ENCODE measurements at regions of chr7 and their contacts with region 1.

Region 1: GRCh38 chr7:12458520-12459131 is 55.0 kb upstream of the VWDE start:
- DNase-seq: peak; percentile 52
- H3K4me3 ChIP-seq: no peak overlapping the region
- H3K27ac ChIP-seq: no peak overlapping the region
- H3K4me1 ChIP-seq: no peaks in the 10 kb centered on the region
- H3K27me3 ChIP-seq: peaks cover 0 to 5% of the 10 kb centered on the region in 2 experiments
- CTCF ChIP-seq: peak; percentile 42 to 62
- POLR2A ChIP-seq: no peak

Region 2: GRCh38 chr7:12031638-12032037 is 427.0 kb before region 1 on chr7:
- CTCF ChIA-PET with region 1: no interaction called
- POLR2A ChIA-PET with region 1: no interaction called
- dilution Hi-C with region 1: no loop called
- intact Hi-C with region 1: no loop called
- DNase-seq: peak; percentile 30
- H3K4me3 ChIP-seq: no peak overlapping the region
- H3K27ac ChIP-seq: no peak overlapping the region
- H3K4me1 ChIP-seq: peaks cover 2% of the 10 kb centered on the region
- H3K27me3 ChIP-seq: no peaks in the 10 kb centered on the region
- CTCF ChIP-seq: no peak
- POLR2A ChIP-seq: no peak

Region 3: DNA sequence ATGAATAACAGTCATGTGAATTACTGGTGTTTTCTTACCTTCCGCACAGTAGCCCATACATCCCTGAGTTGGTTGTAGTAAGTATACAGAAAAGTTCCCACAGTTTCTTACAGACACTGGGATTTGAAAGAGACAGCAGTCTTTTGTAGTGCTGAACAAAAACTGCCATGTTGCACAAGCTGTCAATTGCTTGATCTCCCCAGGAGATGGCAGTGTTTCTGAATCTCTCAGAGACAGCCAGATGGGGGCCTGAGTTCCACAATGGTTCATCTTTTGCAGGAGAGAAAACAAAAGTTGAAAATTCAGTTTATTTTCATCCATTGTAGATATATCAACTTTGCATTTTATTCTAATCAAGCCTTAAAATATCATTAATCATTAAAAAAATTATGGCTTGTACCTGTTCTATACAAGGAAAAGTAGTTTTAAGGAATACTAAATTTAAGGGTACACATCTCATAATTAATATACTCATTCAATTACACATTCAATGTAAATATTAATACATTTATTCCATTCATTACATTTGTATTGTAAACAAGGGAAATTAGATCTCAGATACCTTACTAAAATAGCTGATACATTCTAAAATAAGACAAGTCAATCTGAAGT is 69.4 kb before region 1 on chr7:
- CTCF ChIA-PET with region 1: interaction called, 15 read pairs
- POLR2A ChIA-PET with region 1: no interaction called
- dilution Hi-C with region 1: no loop called
- intact Hi-C with region 1: no loop called
- DNase-seq: peak; percentile 59
- H3K4me3 ChIP-seq: no peak overlapping the region
- H3K27ac ChIP-seq: no peak overlapping the region
- H3K4me1 ChIP-seq: no peaks in the 10 kb centered on the region
- H3K27me3 ChIP-seq: no peaks in the 10 kb centered on the region
- CTCF ChIP-seq: peak; percentile 79
- POLR2A ChIP-seq: no peak

Region 4: GRCh38 chr7:12444785-12445184 is 13.8 kb before region 1 on chr7:
- CTCF ChIA-PET with region 1: interaction called, 34 read pairs
- POLR2A ChIA-PET with region 1: no interaction called
- dilution Hi-C with region 1: no loop called
- intact Hi-C with region 1: no loop called
- DNase-seq: no peak
- H3K4me3 ChIP-seq: no peak overlapping the region
- H3K27ac ChIP-seq: no peak overlapping the region
- H3K4me1 ChIP-seq: no peaks in the 10 kb centered on the region
- H3K27me3 ChIP-seq: peaks cover 4% of the 10 kb centered on the region in 2 experiments
- CTCF ChIP-seq: no peak
- POLR2A ChIP-seq: no peak

Region 5: GRCh38 chr7:12475362-12476063 is 16.9 kb after region 1 on chr7:
- CTCF ChIA-PET with region 1: interaction called, 84 read pairs
- POLR2A ChIA-PET with region 1: no interaction called
- dilution Hi-C with region 1: no loop called
- intact Hi-C with region 1: no loop called
- DNase-seq: peak; percentile 25
- H3K4me3 ChIP-seq: no peak overlapping the region
- H3K27ac ChIP-seq: no peak overlapping the region
- H3K4me1 ChIP-seq: no peaks in the 10 kb centered on the region
- H3K27me3 ChIP-seq: no peaks in the 10 kb centered on the region
- CTCF ChIP-seq: no peak
- POLR2A ChIP-seq: no peak

Region 6: GRCh38 chr7:12490117-12490688 is 31.6 kb after region 1 on chr7:
- CTCF ChIA-PET with region 1: interaction called, 282 read pairs
- POLR2A ChIA-PET with region 1: interaction called, 3 read pairs
- dilution Hi-C with region 1: no loop called
- intact Hi-C with region 1: loop called (anchors 1 kb)
- DNase-seq: peak; percentile 48
- H3K4me3 ChIP-seq: no peak overlapping the region
- H3K27ac ChIP-seq: no peak overlapping the region
- H3K4me1 ChIP-seq: no peaks in the 10 kb centered on the region
- H3K27me3 ChIP-seq: no peaks in the 10 kb centered on the region
- CTCF ChIP-seq: peak; percentile 25 to 28
- POLR2A ChIP-seq: no peak

Region 7: GRCh38 chr7:12623897-12624498 is 165.4 kb after region 1 on chr7:
- CTCF ChIA-PET with region 1: interaction called, 10 read pairs
- POLR2A ChIA-PET with region 1: no interaction called
- dilution Hi-C with region 1: no loop called
- intact Hi-C with region 1: no loop called
- DNase-seq: peak; percentile 54
- H3K4me3 ChIP-seq: no peak overlapping the region
- H3K27ac ChIP-seq: no peak overlapping the region
- H3K4me1 ChIP-seq: peaks cover 28% of the 10 kb centered on the region
- H3K27me3 ChIP-seq: peaks cover 0 to 2% of the 10 kb centered on the region in 2 experiments
- CTCF ChIP-seq: peak; percentile 34 to 57
- POLR2A ChIP-seq: no peak

Region 8: GRCh38 chr7:12827219-12827821 is 368.7 kb after region 1 on chr7:
- CTCF ChIA-PET with region 1: no interaction called
- POLR2A ChIA-PET with region 1: no interaction called
- dilution Hi-C with region 1: no loop called
- intact Hi-C with region 1: no loop called
- DNase-seq: peak; percentile 17
- H3K4me3 ChIP-seq: no peak overlapping the region
- H3K27ac ChIP-seq: no peak overlapping the region
- H3K4me1 ChIP-seq: no peaks in the 10 kb centered on the region
- H3K27me3 ChIP-seq: no peaks in the 10 kb centered on the region
- CTCF ChIP-seq: no peak
- POLR2A ChIP-seq: no peak